Adrenal gland (tissue), 19 donors: ENCODE measurements at regions of chr15 and their contacts with region 1.

Region 1: GRCh38 chr15:52078876-52079700 is 33.5 kb downstream of the BCL2L10 start:
- DNase-seq: peak; percentile 67 to 90 (median 87)
- H3K4me3 ChIP-seq: no peak overlapping the region
- H3K27ac ChIP-seq: no peak overlapping the region
- H3K4me1 ChIP-seq: no peaks in the 10 kb centered on the region
- H3K27me3 ChIP-seq: no peaks in the 10 kb centered on the region
- CTCF ChIP-seq: peak; percentile 47 to 83 (median 78)
- POLR2A ChIP-seq: no peak

Region 2: GRCh38 chr15:51971375-51972133 is 107.5 kb before region 1 on chr15 and contains the start of gene LEO1:
- intact Hi-C with region 1: loop called in 1 of 2 experiments (anchors 10 kb)
- DNase-seq: peak; percentile 92 to 96 (median 94)
- H3K4me3 ChIP-seq: peak within 1 kb of the TSS; percentile 29 to 85 (median 66)
- H3K27ac ChIP-seq: peak within 1 kb of the TSS; percentile 74 to 89 (median 82)
- H3K4me1 ChIP-seq: peaks cover 8 to 15% of the 10 kb centered on the region in 2 donors
- H3K27me3 ChIP-seq: no peaks in the 10 kb centered on the region
- CTCF ChIP-seq: peak in 5 of 6 experiments; percentile 35 to 58 (median 43)
- POLR2A ChIP-seq: peak in 1 of 2 donors; percentile 73
- total RNA-seq, gene LEO1: 10.6 to 23.4 (median 15.2) TPM

Region 3: GRCh38 chr15:52019388-52020220 is 59.5 kb before region 1 on chr15:
- intact Hi-C with region 1: loop called in 1 of 2 experiments (anchors 10 kb)
- DNase-seq: peak; percentile 86 to 93 (median 92)
- H3K4me3 ChIP-seq: peak overlapping the region; percentile 2 to 87 (median 83)
- H3K27ac ChIP-seq: peak overlapping the region; percentile 77 to 100 (median 96)
- H3K4me1 ChIP-seq: peaks cover 24 to 33% of the 10 kb centered on the region in 2 donors
- H3K27me3 ChIP-seq: no peaks in the 10 kb centered on the region
- CTCF ChIP-seq: peak in 1 of 6 experiments; percentile 14
- POLR2A ChIP-seq: peak; percentile 85 to 97

Region 4: DNA sequence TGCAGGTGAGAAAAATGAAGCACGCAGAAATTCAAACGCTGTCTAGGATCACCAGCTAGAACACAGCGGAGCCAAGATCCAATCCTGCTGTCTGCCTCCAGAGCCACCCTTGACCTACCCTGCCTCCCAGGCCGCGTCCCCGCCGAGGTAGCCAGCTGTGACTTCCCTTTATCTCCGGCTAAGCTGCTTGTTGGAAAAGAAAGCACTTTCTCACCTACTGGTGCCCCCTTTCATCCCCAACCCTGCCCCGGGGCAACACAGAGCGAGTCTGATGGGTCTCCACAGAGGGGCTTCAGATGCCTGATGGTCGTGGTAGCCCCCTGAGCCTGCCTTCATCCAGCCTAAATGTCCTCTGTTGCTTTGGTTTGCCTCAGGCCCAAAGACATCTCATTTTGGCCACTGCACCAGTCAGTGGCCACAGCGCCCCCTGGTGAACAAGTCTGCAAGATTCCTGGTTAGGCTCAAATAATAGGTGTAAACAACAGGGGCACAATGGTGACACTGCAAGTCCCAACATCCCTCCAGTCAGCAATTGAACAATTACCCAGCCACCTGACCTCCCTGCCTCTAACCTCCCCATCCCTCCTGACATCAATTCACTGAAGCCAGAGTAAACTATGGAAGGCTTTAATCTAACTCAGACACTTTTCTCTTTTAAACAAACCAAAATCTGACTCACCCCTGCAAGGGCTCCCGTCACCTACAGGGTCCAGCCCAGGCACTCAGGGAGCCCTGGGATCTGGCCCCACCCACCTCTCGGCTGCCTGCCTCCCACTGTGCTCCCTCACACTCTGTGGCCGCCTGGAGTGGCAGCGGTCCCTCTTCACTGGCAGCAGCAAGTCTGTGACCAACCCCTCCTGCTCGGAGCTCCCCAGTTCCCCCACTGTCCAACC is 60.8 kb after region 1 on chr15:
- intact Hi-C with region 1: loop called in 1 of 2 experiments (anchors 10 kb)
- DNase-seq: peak; percentile 64 to 89 (median 78)
- H3K4me3 ChIP-seq: no peak overlapping the region
- H3K27ac ChIP-seq: no peak overlapping the region
- H3K4me1 ChIP-seq: no peaks in the 10 kb centered on the region
- H3K27me3 ChIP-seq: no peaks in the 10 kb centered on the region
- CTCF ChIP-seq: peak; percentile 79 to 87 (median 83)
- POLR2A ChIP-seq: no peak